ENCODE measurements at regions of chr7 and their contacts with region 1.

Region 1: DNA sequence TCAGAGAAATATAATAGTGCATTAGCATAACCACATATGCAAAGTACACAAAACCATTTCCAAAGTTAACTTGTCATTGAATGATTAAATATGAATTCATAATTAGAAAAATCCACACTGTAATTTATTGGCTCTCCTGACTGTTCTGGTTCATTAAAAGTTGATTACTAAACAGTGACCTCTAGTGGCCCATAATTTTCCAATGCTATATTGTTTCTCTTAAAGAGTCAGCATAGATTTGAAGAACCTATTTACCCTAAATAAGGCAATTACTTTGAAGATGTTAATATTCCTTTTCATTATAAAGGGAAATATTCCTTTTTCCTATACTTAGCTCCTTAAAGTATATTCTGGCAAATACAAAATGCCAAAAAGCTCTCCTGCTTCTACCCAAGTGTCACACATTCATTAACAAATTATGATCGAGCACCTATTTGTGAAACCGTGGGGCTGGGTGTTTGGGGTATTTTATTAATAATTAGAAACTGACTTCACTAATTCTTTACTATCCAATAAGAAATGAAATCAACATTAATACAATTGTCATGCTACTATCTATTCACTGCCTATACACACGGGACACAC is 86.2 kb downstream of the HIBADH start:
- DNase-seq: peak in 3 of 10 donors; percentile 22 to 35 (median 23)
- ATAC-seq: no peak
- H3K4me3 Mint-ChIP-seq: no peak overlapping the region
- H3K27ac Mint-ChIP-seq: no peak overlapping the region
- H3K4me1 Mint-ChIP-seq: peaks cover 0 to 6% (median 0%) of the 10 kb centered on the region in 4 donors
- H3K27me3 Mint-ChIP-seq: no peaks in the 10 kb centered on the region

Region 2: GRCh38 chr7:27605689-27606269 is 29.3 kb after region 1 on chr7:
- POLR2A ChIA-PET with region 1: interaction called, 12 read pairs
- DNase-seq: no peak
- ATAC-seq: no peak
- H3K4me3 Mint-ChIP-seq: no peak overlapping the region
- H3K27ac Mint-ChIP-seq: no peak overlapping the region
- H3K4me1 Mint-ChIP-seq: peaks cover 0 to 6% (median 0%) of the 10 kb centered on the region in 4 donors
- H3K27me3 Mint-ChIP-seq: no peaks in the 10 kb centered on the region

Region 3: GRCh38 chr7:27640914-27641580 is 64.6 kb after region 1 on chr7:
- POLR2A ChIA-PET with region 1: no interaction called
- DNase-seq: no peak
- ATAC-seq: no peak
- H3K4me3 Mint-ChIP-seq: no peak overlapping the region
- H3K27ac Mint-ChIP-seq: no peak overlapping the region
- H3K4me1 Mint-ChIP-seq: peaks cover 19 to 36% (median 28%) of the 10 kb centered on the region in 4 donors
- H3K27me3 Mint-ChIP-seq: no peaks in the 10 kb centered on the region

Region 4: DNA sequence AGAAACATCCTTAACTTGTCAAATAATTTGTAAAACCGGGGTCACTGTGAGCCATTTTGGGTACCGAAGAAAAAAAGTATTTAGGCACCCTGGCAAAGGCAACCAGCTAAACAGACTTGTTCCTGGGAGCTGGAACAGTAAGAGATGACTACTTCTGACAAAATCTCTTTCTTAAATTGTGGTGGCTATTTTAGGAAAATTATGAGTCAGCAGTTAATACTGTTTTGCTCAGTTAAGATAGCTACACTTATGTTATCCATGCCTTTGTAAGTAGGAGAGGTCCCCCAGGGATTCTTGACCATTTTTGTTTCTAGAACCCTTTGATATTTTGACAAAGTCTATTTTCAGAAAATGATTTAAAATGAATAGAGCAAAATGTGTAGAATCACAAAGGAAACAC is 232.2 kb after region 1 on chr7:
- POLR2A ChIA-PET with region 1: no interaction called
- DNase-seq: no peak
- ATAC-seq: no peak
- H3K4me3 Mint-ChIP-seq: no peak overlapping the region
- H3K27ac Mint-ChIP-seq: no peak overlapping the region
- H3K4me1 Mint-ChIP-seq: peaks cover 0 to 13% (median 10%) of the 10 kb centered on the region in 4 donors
- H3K27me3 Mint-ChIP-seq: no peaks in the 10 kb centered on the region